Natural killer cell (primary cell): ENCODE measurements at regions of chr2 and their contacts with region 1.

Region 1: DNA sequence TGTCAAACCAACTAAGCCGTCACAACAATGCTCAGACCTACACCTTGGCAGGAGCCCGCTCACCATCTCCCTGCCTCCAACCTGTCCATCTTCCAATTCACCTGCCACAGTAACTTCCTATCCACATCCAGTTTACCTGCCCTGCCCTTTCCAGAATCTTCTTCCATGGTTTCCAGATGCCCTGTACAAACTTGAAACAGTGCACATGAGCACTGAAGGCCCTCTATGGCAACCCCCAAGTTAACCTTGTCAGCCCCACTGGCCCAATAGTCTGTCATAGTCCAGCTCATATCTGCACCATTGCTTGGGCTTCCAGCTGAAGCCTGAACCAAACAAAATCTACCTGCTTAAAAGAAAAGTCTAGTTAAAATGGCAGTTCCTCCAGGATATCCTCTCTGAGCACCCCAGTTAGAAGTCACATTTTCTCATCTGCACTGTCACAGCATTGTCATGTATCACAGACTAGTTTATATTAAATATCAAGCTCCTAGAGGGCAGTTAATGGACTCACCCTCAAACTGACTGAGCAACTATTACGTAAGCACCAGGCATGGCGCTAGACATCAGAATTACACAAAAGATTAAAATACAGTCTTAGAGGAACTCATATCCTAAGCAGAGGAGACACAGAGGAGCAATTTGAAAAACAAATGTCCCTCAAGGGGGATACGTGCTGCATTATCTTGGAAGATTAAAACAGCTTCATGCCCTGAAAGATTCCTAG is 11.6 kb downstream of the NFE2L2 start:
- DNase-seq: no peak
- ATAC-seq: no peak
- H3K4me3 ChIP-seq: no peak overlapping the region
- H3K4me3 Mint-ChIP-seq: peak overlapping the region; percentile 85
- H3K27ac ChIP-seq: peak overlapping the region; percentile 94
- H3K27ac Mint-ChIP-seq: peak overlapping the region; percentile 99 to 100
- H3K4me1 ChIP-seq: peaks cover 63% of the 10 kb centered on the region
- H3K4me1 Mint-ChIP-seq: peaks cover 80 to 88% of the 10 kb centered on the region in 2 donors
- H3K27me3 ChIP-seq: no peaks in the 10 kb centered on the region
- H3K27me3 Mint-ChIP-seq: no peaks in the 10 kb centered on the region
- CTCF ChIP-seq: no peak

Region 2: DNA sequence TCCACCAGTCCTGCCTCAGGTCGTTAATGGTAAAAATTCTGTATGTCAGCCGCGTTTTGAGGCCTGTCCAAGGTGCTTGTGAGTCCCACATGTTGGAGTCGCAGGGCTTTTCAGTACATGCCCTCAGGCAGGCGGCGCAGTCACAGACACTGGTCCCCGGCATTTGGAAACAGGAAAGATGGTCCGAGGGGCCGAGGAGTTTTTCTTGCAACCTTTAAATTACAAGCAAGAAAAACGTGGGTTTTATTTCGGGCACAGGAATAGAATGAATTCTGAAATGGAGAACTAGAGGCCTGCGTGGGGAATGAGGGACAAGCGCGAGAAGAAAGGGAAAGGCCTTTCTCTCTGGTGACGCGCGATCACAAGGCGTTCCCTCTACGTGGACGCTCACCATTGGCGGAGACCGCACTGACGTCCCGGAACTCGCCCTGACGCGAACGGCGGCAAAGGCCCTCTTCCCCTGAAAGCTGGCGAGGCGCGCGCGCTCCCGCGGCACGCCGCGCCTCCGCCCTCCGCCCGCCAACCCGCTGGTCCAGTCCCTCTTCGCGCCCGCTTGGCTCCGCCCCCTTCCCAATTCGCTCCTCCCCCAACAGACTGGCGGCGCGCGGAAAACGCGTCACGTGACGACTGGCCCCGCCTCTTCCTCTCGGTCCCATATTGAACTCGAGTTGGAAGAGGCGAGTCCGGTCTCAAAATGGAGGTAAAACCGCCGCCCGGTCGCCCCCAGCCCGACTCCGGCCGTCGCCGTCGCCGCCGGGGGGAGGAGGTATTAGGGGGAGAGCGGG is 40.7 kb before region 1 on chr2 and contains the start of gene HNRNPA3:
- intact Hi-C with region 1: loop called (anchors 1 kb)
- DNase-seq: peak; percentile 100
- ATAC-seq: peak; percentile 84 to 95 (median 84)
- H3K4me3 ChIP-seq: peak within 1 kb of the TSS; percentile 70
- H3K4me3 Mint-ChIP-seq: peak within 1 kb of the TSS; percentile 94
- H3K27ac ChIP-seq: peak within 1 kb of the TSS; percentile 100
- H3K27ac Mint-ChIP-seq: peak within 1 kb of the TSS; percentile 99 to 100
- H3K4me1 ChIP-seq: peaks cover 18% of the 10 kb centered on the region
- H3K4me1 Mint-ChIP-seq: peaks cover 47 to 51% of the 10 kb centered on the region in 2 donors
- H3K27me3 ChIP-seq: no peaks in the 10 kb centered on the region
- H3K27me3 Mint-ChIP-seq: no peaks in the 10 kb centered on the region
- CTCF ChIP-seq: no peak
- total RNA-seq, gene HNRNPA3: 223 to 298 (median 289) TPM

Region 3: DNA sequence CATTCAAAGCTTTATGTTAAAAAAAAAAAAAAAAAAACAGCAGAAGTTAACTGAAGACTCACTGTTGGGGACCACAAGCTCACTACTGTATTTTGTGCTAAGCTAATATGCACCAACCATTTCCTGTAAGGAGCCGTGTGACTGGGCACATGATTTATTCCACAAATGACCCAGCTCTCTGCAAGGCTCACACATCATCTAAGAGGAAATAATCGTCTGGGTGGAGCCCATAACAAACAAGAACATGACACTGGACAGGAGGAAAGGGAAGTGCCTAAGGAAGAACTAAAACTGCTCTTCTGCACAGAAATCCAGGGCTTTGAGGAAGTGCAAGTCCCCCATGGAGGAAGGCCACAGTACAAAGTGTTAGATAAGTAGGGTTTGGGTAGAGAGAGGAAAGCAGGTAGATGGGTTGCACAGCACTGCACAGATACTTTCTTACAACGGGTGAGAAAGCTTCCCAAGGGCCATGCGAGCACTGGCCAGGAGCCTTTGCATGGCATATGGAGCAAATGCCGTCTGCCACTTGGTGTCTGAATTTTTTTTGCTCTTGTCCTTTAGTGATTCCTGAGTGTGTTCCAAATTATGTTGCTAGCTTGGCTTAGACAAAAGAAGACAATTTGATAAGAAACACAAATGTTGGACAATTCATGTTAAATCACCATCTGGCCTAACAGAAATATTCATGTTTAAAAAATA is 12.9 kb before region 1 on chr2:
- intact Hi-C with region 1: loop called (anchors 1 kb)
- DNase-seq: peak; percentile 52 to 73
- ATAC-seq: peak; percentile 90 to 97 (median 90)
- H3K4me3 ChIP-seq: no peak overlapping the region
- H3K4me3 Mint-ChIP-seq: peak overlapping the region; percentile 80
- H3K27ac ChIP-seq: peak overlapping the region; percentile 86
- H3K27ac Mint-ChIP-seq: peak overlapping the region; percentile 91 to 93
- H3K4me1 ChIP-seq: peaks cover 42% of the 10 kb centered on the region
- H3K4me1 Mint-ChIP-seq: peaks cover 78% of the 10 kb centered on the region in 2 donors
- H3K27me3 ChIP-seq: no peaks in the 10 kb centered on the region
- H3K27me3 Mint-ChIP-seq: no peaks in the 10 kb centered on the region
- CTCF ChIP-seq: no peak